CD8-positive, alpha-beta T cell (primary cell): ENCODE measurements at regions of chr16 and their contacts with region 1.

Region 1: GRCh38 chr16:2926650-2927646 is 15.2 kb downstream of the FLYWCH1 start:
- DNase-seq: peak; percentile 75 to 94 (median 88)
- ATAC-seq: peak; percentile 100
- H3K4me3 ChIP-seq: no peak overlapping the region
- H3K4me3 Mint-ChIP-seq: peak overlapping the region; percentile 6
- H3K27ac ChIP-seq: no peak overlapping the region
- H3K27ac Mint-ChIP-seq: no peak overlapping the region
- H3K4me1 ChIP-seq: peaks cover 4% of the 10 kb centered on the region
- H3K4me1 Mint-ChIP-seq: peaks cover 11% of the 10 kb centered on the region
- H3K27me3 ChIP-seq: no peaks in the 10 kb centered on the region
- H3K27me3 Mint-ChIP-seq: no peaks in the 10 kb centered on the region
- CTCF ChIP-seq: peak; percentile 93

Region 2: GRCh38 chr16:2720719-2721633 is 206.0 kb before region 1 on chr16:
- CTCF ChIA-PET with region 1: no interaction called
- POLR2A ChIA-PET with region 1: no interaction called
- intact Hi-C with region 1: loop called in 1 of 2 experiments (anchors 1 kb)
- DNase-seq: peak; percentile 69 to 93 (median 82)
- ATAC-seq: peak; percentile 90
- H3K4me3 ChIP-seq: peak overlapping the region; percentile 52 to 62
- H3K4me3 Mint-ChIP-seq: peak overlapping the region; percentile 78
- H3K27ac ChIP-seq: peak overlapping the region; percentile 40 to 57
- H3K27ac Mint-ChIP-seq: peak overlapping the region; percentile 79
- H3K4me1 ChIP-seq: peaks cover 1% of the 10 kb centered on the region
- H3K4me1 Mint-ChIP-seq: no peaks in the 10 kb centered on the region
- H3K27me3 ChIP-seq: no peaks in the 10 kb centered on the region
- H3K27me3 Mint-ChIP-seq: peaks cover 12% of the 10 kb centered on the region
- CTCF ChIP-seq: peak; percentile 77

Region 3: GRCh38 chr16:2770057-2770951 is 156.6 kb before region 1 on chr16:
- CTCF ChIA-PET with region 1: no interaction called
- POLR2A ChIA-PET with region 1: no interaction called
- intact Hi-C with region 1: no loop called
- DNase-seq: peak in 2 of 9 experiments; percentile 56 to 58
- ATAC-seq: peak; percentile 18
- H3K4me3 ChIP-seq: no peak overlapping the region
- H3K4me3 Mint-ChIP-seq: no peak overlapping the region
- H3K27ac ChIP-seq: peak overlapping the region in 1 of 2 experiments; percentile 6
- H3K27ac Mint-ChIP-seq: peak overlapping the region; percentile 71
- H3K4me1 ChIP-seq: peaks cover 4% of the 10 kb centered on the region
- H3K4me1 Mint-ChIP-seq: peaks cover 33% of the 10 kb centered on the region
- H3K27me3 ChIP-seq: no peaks in the 10 kb centered on the region
- H3K27me3 Mint-ChIP-seq: no peaks in the 10 kb centered on the region
- CTCF ChIP-seq: no peak

Region 4: DNA sequence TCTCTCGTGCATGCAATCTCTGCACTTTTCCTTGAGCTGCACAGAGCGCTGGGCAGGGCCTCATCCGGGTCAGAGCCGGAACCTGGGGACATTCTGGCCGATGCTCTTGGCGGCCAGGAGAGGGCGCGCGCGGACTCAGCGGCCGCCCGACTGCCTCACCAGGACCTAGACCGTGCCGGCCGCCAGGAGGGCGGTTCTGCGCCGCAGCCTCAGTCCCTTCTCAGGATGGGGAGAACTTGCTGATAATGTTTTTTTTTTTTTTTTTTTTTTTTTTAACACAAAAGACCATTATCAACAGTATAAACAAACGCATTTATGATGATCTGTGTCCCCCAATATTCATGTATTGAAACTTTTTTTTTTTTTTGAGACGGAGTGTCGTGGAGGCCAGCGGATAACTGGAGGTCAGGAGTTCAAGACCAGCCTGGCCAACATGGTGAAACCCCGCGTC is 52.0 kb before region 1 on chr16:
- CTCF ChIA-PET with region 1: interaction called, 23 read pairs
- POLR2A ChIA-PET with region 1: no interaction called
- intact Hi-C with region 1: loop called (anchors 1 to 2 kb)
- DNase-seq: peak; percentile 37 to 86 (median 61)
- ATAC-seq: peak; percentile 100
- H3K4me3 ChIP-seq: no peak overlapping the region
- H3K4me3 Mint-ChIP-seq: no peak overlapping the region
- H3K27ac ChIP-seq: no peak overlapping the region
- H3K27ac Mint-ChIP-seq: no peak overlapping the region
- H3K4me1 ChIP-seq: no peaks in the 10 kb centered on the region
- H3K4me1 Mint-ChIP-seq: no peaks in the 10 kb centered on the region
- H3K27me3 ChIP-seq: no peaks in the 10 kb centered on the region
- H3K27me3 Mint-ChIP-seq: no peaks in the 10 kb centered on the region
- CTCF ChIP-seq: peak; percentile 98

Region 5: GRCh38 chr16:2963723-2964474 is 37.0 kb after region 1 on chr16 and contains the start of gene KREMEN2:
- CTCF ChIA-PET with region 1: interaction called, 10 read pairs
- POLR2A ChIA-PET with region 1: no interaction called
- intact Hi-C with region 1: no loop called
- DNase-seq: peak in 3 of 9 experiments; percentile 16 to 58 (median 48)
- ATAC-seq: peak; percentile 23
- H3K4me3 ChIP-seq: peak within 1 kb of the TSS; percentile 33 to 46
- H3K4me3 Mint-ChIP-seq: peak within 1 kb of the TSS; percentile 81
- H3K27ac ChIP-seq: no peak within 1 kb of the TSS
- H3K27ac Mint-ChIP-seq: no peak within 1 kb of the TSS
- H3K4me1 ChIP-seq: peaks cover 58% of the 10 kb centered on the region
- H3K4me1 Mint-ChIP-seq: peaks cover 35% of the 10 kb centered on the region
- H3K27me3 ChIP-seq: peaks cover 27 to 48% of the 10 kb centered on the region in 2 experiments
- H3K27me3 Mint-ChIP-seq: peaks cover 30% of the 10 kb centered on the region
- CTCF ChIP-seq: no peak
- total RNA-seq, gene KREMEN2: not detected

Region 6: GRCh38 chr16:3012828-3013420 is 86.0 kb after region 1 on chr16 and contains the start of gene CLDN9:
- CTCF ChIA-PET with region 1: no interaction called
- POLR2A ChIA-PET with region 1: no interaction called
- intact Hi-C with region 1: no loop called
- DNase-seq: peak in 1 of 9 experiments; percentile 32
- ATAC-seq: peak; percentile 61
- H3K4me3 ChIP-seq: no peak within 1 kb of the TSS
- H3K4me3 Mint-ChIP-seq: no peak within 1 kb of the TSS
- H3K27ac ChIP-seq: no peak within 1 kb of the TSS
- H3K27ac Mint-ChIP-seq: no peak within 1 kb of the TSS
- H3K4me1 ChIP-seq: peaks cover 21% of the 10 kb centered on the region
- H3K4me1 Mint-ChIP-seq: peaks cover 16% of the 10 kb centered on the region
- H3K27me3 ChIP-seq: peaks cover 6 to 12% of the 10 kb centered on the region in 2 experiments
- H3K27me3 Mint-ChIP-seq: peaks cover 5% of the 10 kb centered on the region
- CTCF ChIP-seq: no peak
- total RNA-seq, gene CLDN9: not detected

Region 7: GRCh38 chr16:3023669-3024478 is 96.9 kb after region 1 on chr16 and contains the starts of genes HCFC1R1 and THOC6:
- CTCF ChIA-PET with region 1: no interaction called
- POLR2A ChIA-PET with region 1: no interaction called
- intact Hi-C with region 1: loop called in 1 of 2 experiments (anchors 1 kb)
- DNase-seq: peak; percentile 88 to 98 (median 96)
- ATAC-seq: peak; percentile 73
- H3K4me3 ChIP-seq: peak within 1 kb of the TSS; percentile 88 to 90
- H3K4me3 Mint-ChIP-seq: peak within 1 kb of the TSS; percentile 95
- H3K27ac ChIP-seq: peak within 1 kb of the TSS; percentile 70 to 96
- H3K27ac Mint-ChIP-seq: peak within 1 kb of the TSS; percentile 95
- H3K4me1 ChIP-seq: peaks cover 65% of the 10 kb centered on the region
- H3K4me1 Mint-ChIP-seq: peaks cover 49% of the 10 kb centered on the region
- H3K27me3 ChIP-seq: peaks cover 0 to 3% of the 10 kb centered on the region in 2 experiments
- H3K27me3 Mint-ChIP-seq: peaks cover 3% of the 10 kb centered on the region
- CTCF ChIP-seq: no peak
- total RNA-seq, gene HCFC1R1: 6.4 to 7.1 TPM
- total RNA-seq, gene THOC6: 13.1 to 14.0 TPM